ENCODE measurements at regions of chr2 and their contacts with region 1.

Region 1: DNA sequence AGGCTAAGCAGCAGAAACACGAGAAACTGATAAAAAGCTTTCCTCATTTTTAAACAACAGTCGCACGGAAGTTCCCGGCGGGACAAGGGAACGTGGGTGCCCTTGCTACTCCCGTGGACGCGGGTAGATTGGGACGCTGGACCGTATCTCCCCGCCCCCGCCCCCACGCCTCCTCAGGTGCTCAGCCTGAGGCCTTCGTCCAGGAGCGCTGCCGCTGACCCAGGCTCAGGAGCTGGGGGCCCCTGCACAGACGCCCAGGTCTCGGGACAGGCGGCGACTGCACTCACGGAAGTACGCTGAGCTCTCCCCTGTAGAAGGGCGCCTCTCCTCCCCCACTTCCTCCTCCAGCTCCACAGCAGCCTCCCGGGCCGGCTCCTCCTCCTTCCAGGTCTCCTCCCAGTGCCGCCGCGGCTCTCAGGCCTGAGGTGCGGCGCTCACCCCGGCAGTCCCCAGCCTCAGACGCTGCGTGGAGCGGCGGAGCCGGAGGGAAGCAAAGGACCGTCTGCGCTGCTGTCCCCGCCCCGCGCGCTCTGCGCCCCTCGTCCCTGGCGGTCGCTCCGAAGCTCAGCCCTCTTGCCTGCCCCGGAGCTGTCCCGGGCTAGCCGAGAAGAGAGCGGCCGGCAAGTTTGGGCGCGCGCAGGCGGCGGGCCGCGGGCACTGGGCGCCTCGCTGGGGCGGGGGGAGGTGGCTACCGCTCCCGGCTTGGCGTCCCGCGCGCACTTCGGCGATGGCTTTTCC is at the start of gene ITGAV:
- DNase-seq: peak; percentile 95
- H3K4me3 Mint-ChIP-seq: peak within 1 kb of the TSS; percentile 76
- H3K27ac Mint-ChIP-seq: peak within 1 kb of the TSS; percentile 60
- H3K4me1 Mint-ChIP-seq: peaks cover 20% of the 10 kb centered on the region
- H3K27me3 Mint-ChIP-seq: no peaks in the 10 kb centered on the region
- CTCF ChIP-seq: no peak
- total RNA-seq, gene ITGAV: 56.1 TPM in 2 replicates

Region 2: DNA sequence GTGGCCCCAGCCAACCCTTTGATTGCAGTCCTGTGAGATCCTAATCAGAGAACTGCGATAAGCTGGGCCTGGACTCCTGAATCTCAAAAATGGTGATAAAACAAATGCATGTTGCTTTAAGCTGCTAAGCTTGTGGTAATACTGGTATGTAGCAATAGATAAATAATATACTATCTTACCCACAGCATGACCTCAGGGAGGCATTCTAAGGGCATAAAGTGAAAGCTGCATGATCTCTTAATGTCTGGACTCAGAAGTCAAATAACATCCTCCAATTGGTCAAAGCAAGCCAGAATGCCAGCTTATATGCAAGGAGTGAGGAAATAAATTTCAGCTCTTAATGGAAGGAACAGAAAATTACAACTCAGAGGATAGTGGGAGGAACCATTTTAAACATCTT is 605.1 kb before region 1 on chr2:
- CTCF ChIA-PET with region 1: no interaction called
- POLR2A ChIA-PET with region 1: no interaction called
- intact Hi-C with region 1: no loop called
- DNase-seq: peak; percentile 25
- H3K4me3 Mint-ChIP-seq: no peak overlapping the region
- H3K27ac Mint-ChIP-seq: peak overlapping the region; percentile 20
- H3K4me1 Mint-ChIP-seq: peaks cover 10% of the 10 kb centered on the region
- H3K27me3 Mint-ChIP-seq: no peaks in the 10 kb centered on the region
- CTCF ChIP-seq: no peak

Region 3: GRCh38 chr2:186485871-186486650 is 103.7 kb before region 1 on chr2 and contains the start of gene ZC3H15:
- CTCF ChIA-PET with region 1: interaction called, 3 read pairs
- POLR2A ChIA-PET with region 1: interaction called, 49 read pairs
- intact Hi-C with region 1: no loop called
- DNase-seq: peak; percentile 97
- H3K4me3 Mint-ChIP-seq: peak within 1 kb of the TSS; percentile 90
- H3K27ac Mint-ChIP-seq: peak within 1 kb of the TSS; percentile 91
- H3K4me1 Mint-ChIP-seq: peaks cover 47% of the 10 kb centered on the region
- H3K27me3 Mint-ChIP-seq: no peaks in the 10 kb centered on the region
- CTCF ChIP-seq: no peak
- total RNA-seq, gene ZC3H15: 75.8 and 98.8 TPM in 2 replicates

Region 4: DNA sequence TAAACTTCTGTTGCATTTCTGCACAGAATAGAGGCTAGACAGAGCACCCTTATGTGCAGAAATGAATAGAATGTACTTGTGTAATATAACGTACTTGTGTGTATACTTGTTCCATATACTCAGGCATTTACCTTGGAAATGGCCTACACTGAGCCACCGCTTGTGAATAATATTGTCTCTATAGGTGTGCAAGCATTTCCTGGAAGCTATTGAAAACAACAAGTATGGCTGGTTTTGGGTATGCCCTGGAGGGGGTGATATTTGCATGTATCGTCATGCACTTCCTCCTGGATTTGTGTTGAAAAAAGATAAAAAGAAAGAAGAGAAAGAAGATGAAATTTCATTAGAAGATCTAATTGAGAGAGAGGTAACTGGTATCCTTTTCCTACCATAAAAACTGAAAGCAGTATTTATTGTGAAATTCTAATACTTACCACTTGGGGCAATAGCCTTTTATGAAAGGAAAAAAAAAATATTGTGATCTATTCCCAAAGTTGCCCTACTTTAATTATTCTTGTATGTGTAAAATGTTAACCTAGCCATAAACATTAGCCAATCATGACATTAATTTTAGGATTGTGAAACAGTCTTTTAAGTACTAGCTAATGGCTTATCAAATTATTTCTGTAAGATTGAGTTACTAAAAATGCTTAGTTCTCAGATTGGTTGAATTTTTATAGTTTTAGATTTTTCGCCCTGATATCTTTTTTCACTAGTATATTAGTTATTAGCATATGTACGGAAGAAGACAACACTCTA is 85.8 kb before region 1 on chr2:
- CTCF ChIA-PET with region 1: interaction called, 16 read pairs
- POLR2A ChIA-PET with region 1: interaction called, 15 read pairs
- intact Hi-C with region 1: loop called (anchors 5 kb)
- DNase-seq: peak; percentile 35
- H3K4me3 Mint-ChIP-seq: no peak overlapping the region
- H3K27ac Mint-ChIP-seq: no peak overlapping the region
- H3K4me1 Mint-ChIP-seq: peaks cover 9% of the 10 kb centered on the region
- H3K27me3 Mint-ChIP-seq: no peaks in the 10 kb centered on the region
- CTCF ChIP-seq: peak; percentile 42

Region 5: DNA sequence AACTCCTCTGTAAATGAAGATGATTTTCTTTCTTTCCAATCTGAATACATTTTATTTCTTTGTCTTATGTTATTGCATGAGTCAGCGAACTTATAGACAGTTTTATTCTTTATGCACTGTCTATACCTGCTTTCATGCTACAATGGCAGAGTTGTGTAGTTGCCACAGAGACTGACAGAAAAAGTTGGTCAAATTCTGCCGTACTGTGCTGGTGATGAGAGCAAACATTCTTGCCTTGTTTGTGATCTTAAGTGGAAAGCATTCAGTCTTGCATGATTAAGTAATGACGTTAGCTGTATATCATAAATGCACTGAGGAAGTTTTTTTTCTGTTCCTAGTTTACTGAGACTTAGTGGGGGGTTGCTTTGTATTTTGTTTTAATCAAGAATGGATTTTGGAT is 70.8 kb before region 1 on chr2:
- CTCF ChIA-PET with region 1: no interaction called
- POLR2A ChIA-PET with region 1: interaction called, 17 read pairs
- intact Hi-C with region 1: loop called (anchors 2 kb)
- DNase-seq: no peak
- H3K4me3 Mint-ChIP-seq: no peak overlapping the region
- H3K27ac Mint-ChIP-seq: no peak overlapping the region
- H3K4me1 Mint-ChIP-seq: no peaks in the 10 kb centered on the region
- H3K27me3 Mint-ChIP-seq: no peaks in the 10 kb centered on the region
- CTCF ChIP-seq: no peak

Region 6: DNA sequence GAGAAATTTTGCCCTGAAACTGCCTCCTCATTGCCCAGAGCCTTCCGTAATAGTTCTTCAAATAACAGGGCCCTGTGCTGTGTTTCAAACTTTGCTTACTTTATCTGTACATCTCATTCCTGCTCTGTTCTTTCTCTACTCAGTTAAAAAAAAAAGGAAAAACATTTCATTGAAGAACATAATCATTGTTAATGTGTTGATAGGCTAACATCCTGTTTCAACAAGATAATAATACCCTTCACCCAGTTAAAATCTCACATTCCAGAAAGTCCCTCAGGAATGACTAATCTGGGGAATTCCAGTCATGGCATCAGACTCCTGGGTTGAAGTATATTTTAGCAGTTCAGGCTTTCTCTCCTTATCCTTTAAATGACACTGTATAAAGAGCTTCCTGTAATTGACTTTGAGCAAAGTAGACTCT is 45.5 kb before region 1 on chr2:
- CTCF ChIA-PET with region 1: no interaction called
- POLR2A ChIA-PET with region 1: interaction called, 23 read pairs
- intact Hi-C with region 1: loop called (anchors 1 kb)
- DNase-seq: peak; percentile 86
- H3K4me3 Mint-ChIP-seq: peak overlapping the region; percentile 47
- H3K27ac Mint-ChIP-seq: no peak overlapping the region
- H3K4me1 Mint-ChIP-seq: no peaks in the 10 kb centered on the region
- H3K27me3 Mint-ChIP-seq: no peaks in the 10 kb centered on the region
- CTCF ChIP-seq: no peak

Region 7: GRCh38 chr2:186575302-186575701 is 14.5 kb before region 1 on chr2:
- CTCF ChIA-PET with region 1: interaction called, 5 read pairs
- POLR2A ChIA-PET with region 1: interaction called, 59 read pairs
- intact Hi-C with region 1: no loop called
- DNase-seq: peak; percentile 98
- H3K4me3 Mint-ChIP-seq: no peak overlapping the region
- H3K27ac Mint-ChIP-seq: peak overlapping the region; percentile 35
- H3K4me1 Mint-ChIP-seq: peaks cover 10% of the 10 kb centered on the region
- H3K27me3 Mint-ChIP-seq: no peaks in the 10 kb centered on the region
- CTCF ChIP-seq: no peak

Measured in MCF 10A (cell line).